Activated naive CD4-positive, alpha-beta T cell treated with anti-CD3 and anti-CD28 coated beads, Interleukin-2, amount 10 ng/mL, durations not matched to agents 7 days and 5 days (primary cell): ENCODE measurements at regions of chr11 and their contacts with region 1.

Region 1: GRCh38 chr11:14907411-14908213 is 15.6 kb upstream of the CYP2R1 start:
- DNase-seq: peak; percentile 89
- H3K4me3 Mint-ChIP-seq: peak overlapping the region; percentile 15
- H3K27ac Mint-ChIP-seq: peak overlapping the region; percentile 45
- H3K4me1 Mint-ChIP-seq: peaks cover 54% of the 10 kb centered on the region
- H3K27me3 Mint-ChIP-seq: no peaks in the 10 kb centered on the region

Region 2: GRCh38 chr11:14300661-14301304 is 606.8 kb before region 1 on chr11:
- CTCF ChIA-PET with region 1: interaction called, 13 read pairs
- DNase-seq: peak; percentile 66
- H3K4me3 Mint-ChIP-seq: no peak overlapping the region
- H3K27ac Mint-ChIP-seq: no peak overlapping the region
- H3K4me1 Mint-ChIP-seq: peaks cover 16% of the 10 kb centered on the region
- H3K27me3 Mint-ChIP-seq: no peaks in the 10 kb centered on the region

Region 3: DNA sequence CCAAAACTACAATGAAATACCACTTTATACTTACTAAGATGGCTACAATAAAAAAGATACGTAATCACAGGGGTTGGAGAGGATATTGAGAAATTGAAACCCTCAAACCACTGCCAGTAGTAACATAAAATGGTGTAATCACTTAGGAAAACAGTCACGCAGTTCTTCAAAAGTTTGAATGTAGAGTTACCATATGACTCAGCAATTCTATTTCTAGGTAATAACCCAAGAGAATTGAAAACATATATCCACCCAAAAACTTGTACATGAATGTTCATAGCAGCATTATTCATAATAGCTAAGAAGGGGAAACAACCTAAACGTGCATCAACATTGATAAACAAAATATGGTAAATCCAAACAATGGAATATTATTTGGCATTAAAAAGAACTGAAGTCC is 363.0 kb before region 1 on chr11:
- CTCF ChIA-PET with region 1: interaction called, 14 read pairs
- DNase-seq: no peak
- H3K4me3 Mint-ChIP-seq: no peak overlapping the region
- H3K27ac Mint-ChIP-seq: peak overlapping the region; percentile 76
- H3K4me1 Mint-ChIP-seq: peaks cover 54% of the 10 kb centered on the region
- H3K27me3 Mint-ChIP-seq: no peaks in the 10 kb centered on the region

Region 4: GRCh38 chr11:14789879-14790484 is 117.6 kb before region 1 on chr11:
- CTCF ChIA-PET with region 1: interaction called, 116 read pairs
- DNase-seq: no peak
- H3K4me3 Mint-ChIP-seq: no peak overlapping the region
- H3K27ac Mint-ChIP-seq: no peak overlapping the region
- H3K4me1 Mint-ChIP-seq: peaks cover 15% of the 10 kb centered on the region
- H3K27me3 Mint-ChIP-seq: no peaks in the 10 kb centered on the region

Region 5: DNA sequence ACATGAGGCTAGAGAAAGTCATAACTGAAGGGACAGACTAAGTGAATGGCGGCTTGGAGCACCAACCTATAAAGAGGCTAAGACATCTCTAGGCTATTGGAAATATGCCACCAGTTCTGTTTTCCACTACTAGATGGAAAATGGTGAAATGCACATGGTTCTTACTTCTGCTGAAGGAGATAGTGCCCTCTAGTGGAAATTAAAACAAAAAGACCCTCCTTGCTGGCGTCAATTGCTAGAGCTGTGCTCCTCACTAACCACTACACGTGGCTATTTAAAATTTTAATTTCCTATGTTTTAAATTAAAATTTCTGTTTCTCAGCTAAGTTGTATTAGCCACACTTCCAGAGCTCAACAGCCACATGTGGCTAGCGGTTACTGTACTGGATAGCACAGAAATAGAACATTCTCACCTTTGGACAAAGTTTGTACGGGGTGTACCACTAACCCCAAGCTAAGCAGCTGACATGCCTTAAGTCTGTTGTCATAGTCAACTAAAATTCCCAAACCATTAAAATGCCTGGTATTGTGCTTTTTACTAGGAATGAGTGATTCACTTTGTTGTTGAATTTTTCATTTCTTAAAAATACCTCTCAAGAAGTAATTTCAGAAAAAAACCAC is 98.6 kb after region 1 on chr11:
- CTCF ChIA-PET with region 1: interaction called, 100 read pairs
- DNase-seq: no peak
- H3K4me3 Mint-ChIP-seq: no peak overlapping the region
- H3K27ac Mint-ChIP-seq: no peak overlapping the region
- H3K4me1 Mint-ChIP-seq: no peaks in the 10 kb centered on the region
- H3K27me3 Mint-ChIP-seq: peaks cover 31% of the 10 kb centered on the region

Region 6: GRCh38 chr11:15035283-15035682 is 127.7 kb after region 1 on chr11:
- CTCF ChIA-PET with region 1: no interaction called
- DNase-seq: no peak
- H3K4me3 Mint-ChIP-seq: no peak overlapping the region
- H3K27ac Mint-ChIP-seq: no peak overlapping the region
- H3K4me1 Mint-ChIP-seq: no peaks in the 10 kb centered on the region
- H3K27me3 Mint-ChIP-seq: peaks cover 21% of the 10 kb centered on the region

Region 7: DNA sequence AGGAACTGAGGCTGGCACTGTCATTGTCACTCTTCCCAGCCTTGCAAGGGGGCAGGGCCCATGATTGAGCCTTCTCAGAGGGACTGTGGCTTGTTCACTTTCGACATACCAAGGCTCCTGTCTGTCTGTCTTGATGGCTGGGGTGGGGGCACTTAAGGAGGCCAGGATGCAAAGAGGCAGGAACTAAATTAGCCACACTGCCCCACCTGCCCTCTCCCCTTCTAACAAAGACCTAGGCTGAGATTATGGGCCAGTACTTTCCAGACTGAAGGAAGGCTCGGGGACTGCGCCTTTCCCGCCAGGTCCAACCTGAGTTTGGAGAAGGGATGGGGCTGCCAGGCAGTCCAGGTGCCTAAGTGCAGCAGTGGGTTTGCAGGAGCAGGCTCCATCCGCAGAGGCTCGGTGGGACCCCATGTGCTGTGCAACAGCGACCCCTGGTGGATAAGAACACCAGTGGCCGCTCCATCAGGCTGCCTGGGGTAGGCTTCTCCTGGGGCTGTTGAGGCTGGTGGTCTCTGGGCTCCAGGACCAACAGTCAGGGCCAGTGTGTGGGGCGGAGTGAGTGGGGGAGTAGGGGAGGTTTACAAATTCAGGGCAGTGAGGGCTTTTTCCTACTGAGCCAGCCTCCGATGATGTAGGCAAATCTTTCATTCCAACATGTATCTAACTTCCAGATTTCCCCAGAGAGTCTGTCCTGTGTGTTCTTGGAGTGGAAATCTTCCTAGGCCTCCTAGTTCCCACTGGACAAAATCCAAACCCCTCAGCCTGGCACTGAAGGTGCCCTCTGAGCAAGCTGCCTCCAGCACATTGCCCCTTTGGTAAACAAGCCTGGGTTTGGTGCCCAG is 301.0 kb after region 1 on chr11:
- CTCF ChIA-PET with region 1: interaction called, 67 read pairs
- DNase-seq: peak; percentile 83
- H3K4me3 Mint-ChIP-seq: no peak overlapping the region
- H3K27ac Mint-ChIP-seq: no peak overlapping the region
- H3K4me1 Mint-ChIP-seq: no peaks in the 10 kb centered on the region
- H3K27me3 Mint-ChIP-seq: peaks cover 35% of the 10 kb centered on the region